B cell (primary cell): ENCODE measurements at regions of chr2 and their contacts with region 1.

Region 1: GRCh38 chr2:145752091-145752806 is 1232.3 kb upstream of the ZEB2 start:
- DNase-seq: peak; percentile 70
- ATAC-seq: peak; percentile 52
- H3K4me3 ChIP-seq: no peak overlapping the region
- H3K4me3 Mint-ChIP-seq: peak overlapping the region; percentile 62
- H3K27ac ChIP-seq: no peak overlapping the region
- H3K27ac Mint-ChIP-seq: peak overlapping the region; percentile 84
- H3K4me1 ChIP-seq: peaks cover 39 to 45% of the 10 kb centered on the region in 2 donors
- H3K4me1 Mint-ChIP-seq: peaks cover 50% of the 10 kb centered on the region
- H3K27me3 ChIP-seq: no peaks in the 10 kb centered on the region
- H3K27me3 Mint-ChIP-seq: no peaks in the 10 kb centered on the region
- CTCF ChIP-seq: peak; percentile 80

Region 2: GRCh38 chr2:144162652-144163051 is 1589.6 kb before region 1 on chr2:
- CTCF ChIA-PET with region 1: interaction called, 9 read pairs
- POLR2A ChIA-PET with region 1: no interaction called
- intact Hi-C with region 1: loop called (anchors 1 kb)
- DNase-seq: peak; percentile 65
- ATAC-seq: peak; percentile 63
- H3K4me3 ChIP-seq: no peak overlapping the region
- H3K4me3 Mint-ChIP-seq: no peak overlapping the region
- H3K27ac ChIP-seq: no peak overlapping the region
- H3K27ac Mint-ChIP-seq: no peak overlapping the region
- H3K4me1 ChIP-seq: no peaks in the 10 kb centered on the region
- H3K4me1 Mint-ChIP-seq: peaks cover 4% of the 10 kb centered on the region
- H3K27me3 ChIP-seq: no peaks in the 10 kb centered on the region
- H3K27me3 Mint-ChIP-seq: no peaks in the 10 kb centered on the region
- CTCF ChIP-seq: peak; percentile 69

Region 3: DNA sequence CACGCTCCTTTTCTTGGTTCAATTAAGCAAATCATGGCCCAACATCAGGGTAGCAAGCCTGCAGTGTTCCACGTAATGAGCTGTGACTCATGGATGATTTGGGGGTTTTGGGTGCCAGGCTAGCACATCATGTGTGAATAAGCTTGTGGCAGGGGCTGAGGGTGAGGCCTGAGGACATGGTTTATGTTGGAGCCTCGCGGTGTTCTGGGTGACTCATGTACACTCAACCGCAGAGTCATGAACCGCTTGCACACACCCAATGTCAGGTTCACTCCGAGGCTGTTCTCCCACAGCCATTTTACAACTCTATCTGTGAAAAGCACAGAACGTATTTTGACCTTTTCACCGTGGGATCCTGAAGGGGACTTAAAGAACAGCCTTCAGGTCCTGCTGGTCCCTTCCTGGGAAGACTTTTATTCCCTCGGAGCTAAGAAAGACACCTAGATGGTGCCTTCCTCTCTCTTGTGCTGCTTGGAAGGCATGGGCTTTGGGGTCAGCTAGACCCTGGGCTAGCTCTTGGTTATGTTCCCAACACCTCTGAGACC is 1092.4 kb before region 1 on chr2:
- CTCF ChIA-PET with region 1: no interaction called
- POLR2A ChIA-PET with region 1: no interaction called
- intact Hi-C with region 1: no loop called
- DNase-seq: no peak
- ATAC-seq: peak; percentile 82
- H3K4me3 ChIP-seq: no peak overlapping the region
- H3K4me3 Mint-ChIP-seq: no peak overlapping the region
- H3K27ac ChIP-seq: no peak overlapping the region
- H3K27ac Mint-ChIP-seq: no peak overlapping the region
- H3K4me1 ChIP-seq: peaks cover 4 to 16% of the 10 kb centered on the region in 2 donors
- H3K4me1 Mint-ChIP-seq: peaks cover 19% of the 10 kb centered on the region
- H3K27me3 ChIP-seq: no peaks in the 10 kb centered on the region
- H3K27me3 Mint-ChIP-seq: no peaks in the 10 kb centered on the region
- CTCF ChIP-seq: no peak

Region 4: GRCh38 chr2:145411493-145411892 is 340.8 kb before region 1 on chr2:
- CTCF ChIA-PET with region 1: interaction called, 5 read pairs
- POLR2A ChIA-PET with region 1: no interaction called
- intact Hi-C with region 1: loop called (anchors 5 kb)
- DNase-seq: peak; percentile 81
- ATAC-seq: peak; percentile 85
- H3K4me3 ChIP-seq: peak overlapping the region in 3 of 5 experiments; percentile 3 to 21 (median 4)
- H3K4me3 Mint-ChIP-seq: peak overlapping the region; percentile 84
- H3K27ac ChIP-seq: peak overlapping the region; percentile 34 to 62
- H3K27ac Mint-ChIP-seq: peak overlapping the region; percentile 71
- H3K4me1 ChIP-seq: peaks cover 25 to 35% of the 10 kb centered on the region in 2 donors
- H3K4me1 Mint-ChIP-seq: peaks cover 42% of the 10 kb centered on the region
- H3K27me3 ChIP-seq: peaks cover 0 to 7% (median 3%) of the 10 kb centered on the region in 4 experiments
- H3K27me3 Mint-ChIP-seq: no peaks in the 10 kb centered on the region
- CTCF ChIP-seq: no peak

Region 5: DNA sequence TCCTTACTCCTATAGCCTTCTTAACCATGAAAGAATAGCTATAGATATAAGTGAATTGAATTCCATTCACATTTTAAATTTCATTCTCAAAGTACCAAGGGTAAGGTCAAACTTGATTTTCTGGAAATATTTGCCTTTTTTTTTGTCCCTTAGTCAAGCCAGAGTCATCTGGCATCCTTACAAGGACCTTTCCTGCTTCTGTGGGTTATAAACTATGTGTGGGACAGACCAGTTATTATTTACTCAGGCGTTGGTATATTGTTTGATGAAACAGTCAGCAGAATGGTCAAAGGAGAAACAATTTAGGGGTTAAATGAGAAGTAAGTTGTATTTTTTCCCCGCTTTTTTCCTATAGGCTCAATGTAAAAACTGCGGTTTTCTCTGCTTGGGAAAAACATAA is 129.1 kb before region 1 on chr2:
- CTCF ChIA-PET with region 1: no interaction called
- POLR2A ChIA-PET with region 1: no interaction called
- intact Hi-C with region 1: no loop called
- DNase-seq: no peak
- ATAC-seq: no peak
- H3K4me3 ChIP-seq: no peak overlapping the region
- H3K4me3 Mint-ChIP-seq: no peak overlapping the region
- H3K27ac ChIP-seq: no peak overlapping the region
- H3K27ac Mint-ChIP-seq: no peak overlapping the region
- H3K4me1 ChIP-seq: no peaks in the 10 kb centered on the region
- H3K4me1 Mint-ChIP-seq: no peaks in the 10 kb centered on the region
- H3K27me3 ChIP-seq: no peaks in the 10 kb centered on the region
- H3K27me3 Mint-ChIP-seq: no peaks in the 10 kb centered on the region
- CTCF ChIP-seq: no peak